ENCODE measurements at regions of chr5 and their contacts with region 1.

Region 1: DNA sequence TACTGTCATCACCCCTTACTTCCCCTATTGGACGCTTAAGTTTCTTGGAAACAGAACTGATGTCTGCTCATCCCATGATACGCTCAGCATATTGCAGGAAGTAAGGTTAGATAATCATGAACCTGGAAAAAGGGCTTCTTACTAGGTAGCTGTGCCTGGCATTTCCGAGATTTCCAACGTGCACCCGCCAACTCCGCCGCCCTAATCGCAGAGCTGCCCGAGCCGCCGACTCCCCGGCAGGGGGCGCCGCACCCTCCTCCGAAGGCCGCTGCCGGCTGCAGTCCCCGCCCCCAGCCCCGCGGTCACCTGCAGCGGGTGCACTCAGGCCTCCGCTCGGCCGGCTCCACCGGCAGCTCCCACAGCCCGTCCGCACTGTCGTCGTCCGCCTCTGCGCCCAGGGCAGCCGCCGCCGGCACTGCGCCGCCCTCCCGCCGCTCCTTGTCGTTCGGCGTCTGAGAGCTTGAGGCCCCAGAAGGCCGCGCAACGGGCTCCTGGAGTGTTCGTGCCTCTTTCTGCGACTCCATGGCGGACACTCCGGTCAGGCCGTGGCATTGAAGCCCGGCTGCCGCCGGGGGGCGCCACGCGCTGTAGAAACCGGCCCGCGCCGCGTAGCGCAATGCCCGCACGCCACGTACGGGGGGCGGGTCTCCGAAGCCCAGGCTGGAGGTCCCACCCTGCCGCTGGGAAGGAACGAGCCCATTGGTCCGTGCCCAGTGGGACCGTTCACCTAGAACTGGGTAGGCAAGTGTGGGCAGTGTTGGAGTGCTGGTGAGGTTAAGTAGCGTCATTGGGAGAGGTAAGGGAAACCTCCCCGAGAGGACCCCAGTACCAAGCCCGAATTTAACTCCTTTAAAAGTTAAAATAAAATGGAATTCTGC is at the start of gene DTWD2:
- DNase-seq: peak; percentile 89 to 95
- H3K4me3 ChIP-seq: peak within 1 kb of the TSS; percentile 71 to 88
- H3K27ac ChIP-seq: peak within 1 kb of the TSS; percentile 87 to 94
- H3K4me1 ChIP-seq: peaks cover 0 to 15% (median 5%) of the 10 kb centered on the region in 4 donors
- H3K27me3 ChIP-seq: no peaks in the 10 kb centered on the region
- CTCF ChIP-seq: peak; percentile 87

Region 2: GRCh38 chr5:119411935-119412602 is 423.8 kb after region 1 on chr5:
- intact Hi-C with region 1: loop called (anchors 5 kb)
- DNase-seq: peak; percentile 52 to 78
- H3K4me3 ChIP-seq: peak overlapping the region; percentile 48 to 55
- H3K27ac ChIP-seq: peak overlapping the region; percentile 71 to 77
- H3K4me1 ChIP-seq: peaks cover 0 to 17% (median 3%) of the 10 kb centered on the region in 4 donors
- H3K27me3 ChIP-seq: no peaks in the 10 kb centered on the region
- CTCF ChIP-seq: peak; percentile 95

Measured in tibial artery (tissue), 4 donors.